Activated B cell treated with CpG ODN at 0.5 μM for 24 hours (primary cell): ENCODE measurements at regions of chr1 and their contacts with region 1.

Region 1: GRCh38 chr1:157415661-157416060 is 136.7 kb downstream of the FCRL5 start:
- DNase-seq: no peak
- ATAC-seq: no peak
- H3K4me3 Mint-ChIP-seq: no peak overlapping the region
- H3K27ac Mint-ChIP-seq: no peak overlapping the region
- H3K4me1 Mint-ChIP-seq: no peaks in the 10 kb centered on the region
- H3K27me3 Mint-ChIP-seq: peaks cover 21% of the 10 kb centered on the region
- CTCF ChIP-seq: no peak

Region 2: GRCh38 chr1:157390651-157391050 is 25.0 kb before region 1 on chr1:
- CTCF ChIA-PET with region 1: no interaction called
- POLR2A ChIA-PET with region 1: no interaction called
- intact Hi-C with region 1: loop called (anchors 2 kb)
- DNase-seq: no peak
- ATAC-seq: no peak
- H3K4me3 Mint-ChIP-seq: no peak overlapping the region
- H3K27ac Mint-ChIP-seq: no peak overlapping the region
- H3K4me1 Mint-ChIP-seq: no peaks in the 10 kb centered on the region
- H3K27me3 Mint-ChIP-seq: peaks cover 44% of the 10 kb centered on the region
- CTCF ChIP-seq: no peak